Aorta (tissue), 5 donors: ENCODE measurements at regions of chr1 and their contacts with region 1.

Region 1: DNA sequence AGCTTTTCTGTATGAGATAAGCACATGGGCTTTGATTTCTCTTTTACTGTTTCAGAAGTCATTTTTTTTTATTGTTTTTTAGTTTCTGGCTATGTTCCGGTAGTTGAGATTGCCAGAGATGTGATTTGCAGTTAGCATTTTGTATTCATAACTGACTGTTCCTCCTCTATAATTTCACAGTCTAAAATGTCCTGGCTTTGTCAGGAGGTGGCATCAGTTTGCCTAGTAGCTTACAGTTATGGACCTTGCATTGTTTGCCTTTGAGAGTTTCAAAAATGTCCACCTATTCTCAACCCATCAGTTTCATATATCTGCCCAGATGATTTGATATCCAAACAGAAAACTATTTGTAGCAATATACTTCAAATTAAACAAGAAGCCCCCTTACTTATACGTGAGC is 39.5 kb upstream of the ST6GALNAC3 start:
- DNase-seq: no peak
- ATAC-seq: no peak
- H3K4me3 ChIP-seq: no peak overlapping the region
- H3K27ac ChIP-seq: no peak overlapping the region
- H3K4me1 ChIP-seq: no peaks in the 10 kb centered on the region
- H3K27me3 ChIP-seq: no peaks in the 10 kb centered on the region

Region 2: GRCh38 chr1:76090283-76091203 is 55.5 kb after region 1 on chr1:
- intact Hi-C with region 1: loop called in 1 of 2 experiments (anchors 10 kb)
- DNase-seq: no peak
- ATAC-seq: no peak
- H3K4me3 ChIP-seq: no peak overlapping the region
- H3K27ac ChIP-seq: no peak overlapping the region
- H3K4me1 ChIP-seq: peaks cover 0 to 3% of the 10 kb centered on the region in 2 donors
- H3K27me3 ChIP-seq: no peaks in the 10 kb centered on the region